IMR-90 (cell line): ENCODE measurements at regions of chr12 and their contacts with region 1.

Region 1: GRCh38 chr12:65335021-65335714 is 56.7 kb downstream of the MSRB3 start:
- DNase-seq: peak; percentile 95
- ATAC-seq: peak; percentile 86
- H3K4me3 ChIP-seq: no peak overlapping the region
- H3K27ac ChIP-seq: peak overlapping the region; percentile 91
- H3K4me1 ChIP-seq: peaks cover 10% of the 10 kb centered on the region
- H3K27me3 ChIP-seq: no peaks in the 10 kb centered on the region
- CTCF ChIP-seq: no peak
- POLR2A ChIP-seq: no peak
- RAD21 ChIP-seq: peak; percentile 11; the same call in 1 of the 2 replicates

Region 2: DNA sequence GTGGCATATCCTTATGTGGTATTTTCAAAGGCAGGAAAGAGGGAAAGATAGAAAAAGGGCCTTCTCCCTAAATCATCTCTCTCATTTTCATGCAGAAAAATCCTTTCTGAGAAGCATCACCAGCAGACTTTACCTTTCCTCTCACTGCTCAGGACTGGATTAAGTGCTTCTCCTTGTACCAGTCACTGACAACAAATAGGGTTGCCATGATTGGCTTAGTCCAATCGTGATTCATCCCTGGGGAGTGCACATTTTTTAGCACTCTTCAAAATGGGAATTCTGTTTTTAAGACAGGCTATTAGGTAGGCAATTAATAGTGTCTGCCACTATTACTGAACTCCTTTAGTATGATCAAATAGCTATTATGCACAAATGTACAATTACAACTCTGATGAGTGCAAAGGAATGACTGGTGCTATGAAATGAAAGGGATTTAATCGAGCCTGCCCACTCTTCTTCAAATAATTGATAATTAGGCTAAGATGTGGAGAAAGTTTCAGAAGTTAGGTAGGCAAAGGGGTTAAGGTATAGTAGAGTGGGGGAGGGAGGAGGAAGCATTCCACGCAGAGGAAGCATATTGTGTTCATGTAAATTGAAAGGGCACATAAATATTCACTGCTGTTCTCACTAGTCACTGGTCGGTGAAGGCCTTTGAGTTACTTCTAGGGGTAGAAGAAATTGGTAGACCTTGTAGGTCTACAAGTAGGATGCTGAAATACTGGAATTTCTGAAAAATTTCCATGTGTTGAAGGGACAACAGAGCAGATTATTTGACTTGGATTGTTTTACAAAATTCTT is 27.3 kb after region 1 on chr12:
- CTCF ChIA-PET with region 1: no interaction called
- POLR2A ChIA-PET with region 1: no interaction called
- dilution Hi-C with region 1: no loop called
- in situ Hi-C with region 1: no loop called
- intact Hi-C with region 1: loop called (anchors 1 kb)
- DNase-seq: peak; percentile 22
- ATAC-seq: peak; percentile 44; the same call in 1 of the 2 replicates
- H3K4me3 ChIP-seq: no peak overlapping the region
- H3K27ac ChIP-seq: no peak overlapping the region
- H3K4me1 ChIP-seq: peaks cover 6% of the 10 kb centered on the region; the same call in 1 of the 2 replicates
- H3K27me3 ChIP-seq: no peaks in the 10 kb centered on the region
- CTCF ChIP-seq: no peak
- POLR2A ChIP-seq: no peak
- RAD21 ChIP-seq: no peak

Region 3: GRCh38 chr12:65585648-65586602 is 250.8 kb after region 1 on chr12:
- CTCF ChIA-PET with region 1: no interaction called
- POLR2A ChIA-PET with region 1: no interaction called
- dilution Hi-C with region 1: no loop called
- in situ Hi-C with region 1: no loop called
- intact Hi-C with region 1: no loop called
- DNase-seq: no peak
- ATAC-seq: no peak; the same call in 1 of the 2 replicates
- H3K4me3 ChIP-seq: no peak overlapping the region
- H3K27ac ChIP-seq: no peak overlapping the region
- H3K4me1 ChIP-seq: no peaks in the 10 kb centered on the region
- H3K27me3 ChIP-seq: no peaks in the 10 kb centered on the region
- CTCF ChIP-seq: 0 out of 2 replicates have a peak, but pooled peaks have one; percentile 1
- POLR2A ChIP-seq: no peak
- RAD21 ChIP-seq: no peak